ENCODE measurements at regions of chr5 and their contacts with region 1.

Region 1: DNA sequence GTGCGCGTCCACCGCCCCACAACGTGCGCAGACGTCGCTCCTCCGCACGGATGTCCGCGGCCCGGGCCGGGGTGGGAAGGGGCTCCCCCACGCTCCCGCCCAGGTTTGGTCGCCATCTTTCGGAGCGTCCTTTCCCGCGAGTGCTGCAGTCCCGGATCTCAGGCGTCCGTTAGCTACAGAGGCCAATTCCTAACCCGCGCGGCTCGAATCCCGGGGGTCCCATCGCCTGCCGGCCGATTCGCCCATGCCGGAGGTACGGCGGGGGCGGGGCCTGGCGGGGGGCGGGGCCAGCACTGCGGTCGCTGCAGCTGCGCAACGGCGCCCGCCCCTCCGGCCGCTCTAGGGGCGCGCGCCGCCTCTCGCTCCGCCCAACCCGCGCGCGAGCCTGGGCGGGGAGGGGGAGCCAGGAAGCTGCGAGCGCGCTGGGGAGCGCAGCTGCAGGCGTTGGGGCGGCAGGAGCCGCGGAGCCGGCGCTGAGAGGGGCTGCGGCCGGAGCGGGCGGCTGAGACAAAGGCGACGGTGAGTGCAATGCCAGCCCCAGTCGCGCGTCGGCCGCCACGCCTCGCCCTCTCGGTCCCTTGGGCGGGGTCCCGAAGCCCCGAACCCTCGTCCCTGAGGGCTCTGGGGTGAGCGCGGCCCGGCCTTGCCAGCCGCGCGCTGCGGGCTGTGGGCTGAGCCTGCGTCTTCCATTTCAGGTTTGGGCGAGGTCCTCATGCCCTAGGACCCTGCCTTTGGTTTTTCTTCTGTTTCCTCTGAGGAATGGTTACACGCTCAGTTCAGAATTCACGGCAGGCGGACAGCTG is at the start of gene CDC42SE2:
- DNase-seq: peak; percentile 74 to 94 (median 84)
- ATAC-seq: peak; percentile 89 to 93 (median 90)
- H3K4me3 ChIP-seq: peak within 1 kb of the TSS; percentile 85 to 96
- H3K4me3 Mint-ChIP-seq: peak within 1 kb of the TSS; percentile 85 to 94 (median 91)
- H3K27ac ChIP-seq: peak within 1 kb of the TSS; percentile 95
- H3K27ac Mint-ChIP-seq: peak within 1 kb of the TSS; percentile 92 to 94
- H3K4me1 ChIP-seq: peaks cover 30 to 37% of the 10 kb centered on the region in 2 experiments
- H3K4me1 Mint-ChIP-seq: peaks cover 45 to 59% (median 56%) of the 10 kb centered on the region in 3 donors
- H3K27me3 ChIP-seq: no peaks in the 10 kb centered on the region
- H3K27me3 Mint-ChIP-seq: no peaks in the 10 kb centered on the region
- total RNA-seq, gene CDC42SE2: 229 to 259 (median 238) TPM

Region 2: DNA sequence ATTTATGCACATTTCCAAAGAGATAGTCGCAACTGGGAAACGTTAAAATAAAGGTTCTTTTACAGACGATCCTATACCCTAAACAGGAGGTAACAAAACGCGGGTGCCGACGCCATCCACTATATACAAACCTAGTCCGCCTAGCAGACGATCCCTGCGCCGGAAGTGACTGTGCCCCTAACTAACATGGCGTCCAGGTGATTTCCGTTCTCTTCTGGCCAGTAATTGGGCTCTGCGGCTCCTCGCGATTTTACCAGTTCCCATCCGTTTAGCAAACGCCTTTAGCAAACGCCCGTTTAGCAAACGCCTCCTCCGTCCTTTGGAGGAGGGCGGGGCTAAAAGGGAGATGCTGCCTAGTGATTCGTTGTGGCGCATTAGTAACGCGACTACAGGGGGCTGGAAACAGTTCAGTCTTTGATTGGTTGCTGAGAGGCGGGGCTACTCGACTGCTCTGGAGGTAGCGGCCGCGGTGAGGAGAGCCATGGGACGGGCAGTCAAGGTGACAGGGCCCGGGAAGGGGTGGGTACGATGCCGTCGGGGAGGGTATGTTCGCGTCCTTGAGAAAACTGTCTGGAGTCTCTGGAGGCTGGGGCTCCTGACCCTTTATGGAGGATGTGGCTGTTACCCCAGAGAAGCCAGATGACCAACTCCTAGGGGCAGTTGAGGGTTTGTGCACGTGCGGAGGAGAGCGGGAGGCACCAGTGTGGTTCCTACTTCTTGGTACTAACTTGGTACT is 93.1 kb before region 1 on chr5 and contains the start of gene LYRM7:
- CTCF ChIA-PET with region 1: interaction called, 4 to 5 read pairs
- POLR2A ChIA-PET with region 1: interaction called, 11 to 30 read pairs
- DNase-seq: peak; percentile 78 to 99 (median 96)
- ATAC-seq: peak; percentile 93 to 97 (median 96)
- H3K4me3 ChIP-seq: peak within 1 kb of the TSS; percentile 74 to 79
- H3K4me3 Mint-ChIP-seq: peak within 1 kb of the TSS; percentile 94 to 99 (median 96)
- H3K27ac ChIP-seq: peak within 1 kb of the TSS; percentile 86
- H3K27ac Mint-ChIP-seq: peak within 1 kb of the TSS; percentile 92 to 98
- H3K4me1 ChIP-seq: peaks cover 12 to 13% of the 10 kb centered on the region in 2 experiments
- H3K4me1 Mint-ChIP-seq: peaks cover 52 to 54% (median 52%) of the 10 kb centered on the region in 3 donors
- H3K27me3 ChIP-seq: no peaks in the 10 kb centered on the region
- H3K27me3 Mint-ChIP-seq: no peaks in the 10 kb centered on the region
- total RNA-seq, gene LYRM7: 7.5 to 17.0 (median 12.9) TPM

Region 3: GRCh38 chr5:131252824-131253171 is 11.1 kb before region 1 on chr5:
- CTCF ChIA-PET with region 1: interaction called, 4 to 37 read pairs
- POLR2A ChIA-PET with region 1: interaction called, 13 to 84 read pairs
- DNase-seq: peak; percentile 56 to 93 (median 81)
- ATAC-seq: peak; percentile 83 to 90 (median 86)
- H3K4me3 ChIP-seq: peak overlapping the region; percentile 63 to 68
- H3K4me3 Mint-ChIP-seq: peak overlapping the region; percentile 75 to 96 (median 91)
- H3K27ac ChIP-seq: peak overlapping the region; percentile 98
- H3K27ac Mint-ChIP-seq: peak overlapping the region; percentile 98 to 99
- H3K4me1 ChIP-seq: peaks cover 48 to 55% of the 10 kb centered on the region in 2 experiments
- H3K4me1 Mint-ChIP-seq: peaks cover 71 to 76% (median 73%) of the 10 kb centered on the region in 3 donors
- H3K27me3 ChIP-seq: no peaks in the 10 kb centered on the region
- H3K27me3 Mint-ChIP-seq: no peaks in the 10 kb centered on the region

Region 4: DNA sequence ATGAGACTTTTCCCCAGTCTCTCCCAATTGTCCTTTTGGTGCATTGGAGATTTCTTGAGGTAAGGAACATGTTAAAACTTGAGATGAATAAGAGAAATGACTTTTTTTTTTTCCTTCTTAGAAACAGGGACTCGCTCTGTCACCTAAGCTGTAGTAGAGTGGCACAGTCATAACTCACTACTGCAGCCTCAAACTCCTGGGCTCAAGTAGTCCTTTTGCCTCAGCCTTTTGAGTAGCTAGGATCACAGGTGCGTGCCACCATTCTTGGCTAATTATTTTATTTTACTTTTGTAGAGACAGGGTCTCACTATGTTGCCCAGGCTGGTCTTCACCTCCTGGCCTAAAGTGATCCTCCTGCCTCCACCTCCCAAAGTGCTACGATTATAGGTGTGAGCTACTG is 25.9 kb after region 1 on chr5:
- CTCF ChIA-PET with region 1: interaction called, 7 to 11 read pairs
- POLR2A ChIA-PET with region 1: interaction called, 6 to 17 read pairs
- DNase-seq: no peak
- ATAC-seq: peak; percentile 43 to 70 (median 62)
- H3K4me3 ChIP-seq: peak overlapping the region; percentile 17 to 32
- H3K4me3 Mint-ChIP-seq: peak overlapping the region; percentile 77 to 83 (median 77)
- H3K27ac ChIP-seq: peak overlapping the region; percentile 84
- H3K27ac Mint-ChIP-seq: peak overlapping the region; percentile 91 to 96
- H3K4me1 ChIP-seq: peaks cover 62 to 71% of the 10 kb centered on the region in 2 experiments
- H3K4me1 Mint-ChIP-seq: peaks cover 78 to 83% (median 81%) of the 10 kb centered on the region in 3 donors
- H3K27me3 ChIP-seq: no peaks in the 10 kb centered on the region
- H3K27me3 Mint-ChIP-seq: no peaks in the 10 kb centered on the region

Region 5: DNA sequence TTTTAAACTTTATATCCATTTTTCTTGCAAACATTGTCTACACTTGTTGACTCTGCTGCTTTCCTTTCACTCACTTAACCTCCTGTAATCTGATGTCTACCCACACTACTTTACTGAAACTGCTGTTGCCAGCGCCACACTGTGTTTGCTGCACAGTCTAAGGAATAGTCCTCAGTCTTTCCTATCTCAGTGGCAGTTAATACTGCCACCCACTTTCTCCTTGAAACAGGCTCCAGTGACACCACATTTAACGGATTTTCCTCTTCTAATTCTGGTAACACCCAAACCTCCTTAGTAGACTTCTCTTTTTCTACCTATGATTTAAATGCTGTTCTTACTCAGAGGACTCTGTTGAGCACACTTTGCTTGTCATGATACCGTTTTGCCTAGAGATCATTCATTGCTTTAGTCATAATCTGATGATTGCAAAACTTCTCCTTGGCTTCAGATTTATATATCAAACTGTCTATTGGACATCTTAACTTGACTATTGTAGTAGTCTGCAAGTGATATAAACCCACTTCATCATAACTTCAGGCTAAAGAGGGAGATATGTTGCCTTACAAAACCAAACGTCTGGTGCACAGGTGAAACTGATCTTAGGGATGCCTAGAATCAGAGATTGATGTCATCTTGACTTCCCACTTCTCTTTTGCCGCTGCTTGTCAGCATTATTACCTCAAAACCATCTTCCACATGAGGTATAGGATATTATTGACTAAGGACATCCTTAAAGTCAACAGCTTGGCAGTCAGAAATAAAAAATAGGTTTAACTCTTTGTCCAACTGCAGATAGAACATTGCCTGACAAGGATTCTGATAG is 94.1 kb after region 1 on chr5:
- CTCF ChIA-PET with region 1: interaction called in 1 of 2 experiments, 13 read pairs
- POLR2A ChIA-PET with region 1: interaction called, 3 to 15 read pairs
- DNase-seq: peak in 10 of 35 experiments; percentile 16 to 59 (median 34)
- ATAC-seq: peak; percentile 68 to 76 (median 71)
- H3K4me3 ChIP-seq: no peak overlapping the region
- H3K4me3 Mint-ChIP-seq: peak overlapping the region; percentile 3 to 57 (median 27)
- H3K27ac ChIP-seq: peak overlapping the region; percentile 66
- H3K27ac Mint-ChIP-seq: peak overlapping the region; percentile 81 to 90
- H3K4me1 ChIP-seq: peaks cover 30 to 33% of the 10 kb centered on the region in 2 experiments
- H3K4me1 Mint-ChIP-seq: peaks cover 75 to 81% (median 77%) of the 10 kb centered on the region in 3 donors
- H3K27me3 ChIP-seq: no peaks in the 10 kb centered on the region
- H3K27me3 Mint-ChIP-seq: no peaks in the 10 kb centered on the region

Region 6: GRCh38 chr5:131382407-131383395 is 118.9 kb after region 1 on chr5:
- CTCF ChIA-PET with region 1: interaction called, 18 to 31 read pairs
- POLR2A ChIA-PET with region 1: interaction called, 11 to 36 read pairs
- DNase-seq: peak in 33 of 35 experiments; percentile 8 to 88 (median 51)
- ATAC-seq: peak; percentile 68 to 74 (median 72)
- H3K4me3 ChIP-seq: no peak overlapping the region
- H3K4me3 Mint-ChIP-seq: peak overlapping the region; percentile 34 to 69 (median 38)
- H3K27ac ChIP-seq: peak overlapping the region; percentile 99
- H3K27ac Mint-ChIP-seq: peak overlapping the region; percentile 97 to 100
- H3K4me1 ChIP-seq: peaks cover 61 to 68% of the 10 kb centered on the region in 2 experiments
- H3K4me1 Mint-ChIP-seq: peaks cover 85 to 92% (median 91%) of the 10 kb centered on the region in 3 donors
- H3K27me3 ChIP-seq: no peaks in the 10 kb centered on the region
- H3K27me3 Mint-ChIP-seq: no peaks in the 10 kb centered on the region